ENCODE measurements at regions of chr15 and their contacts with region 1.

Region 1: DNA sequence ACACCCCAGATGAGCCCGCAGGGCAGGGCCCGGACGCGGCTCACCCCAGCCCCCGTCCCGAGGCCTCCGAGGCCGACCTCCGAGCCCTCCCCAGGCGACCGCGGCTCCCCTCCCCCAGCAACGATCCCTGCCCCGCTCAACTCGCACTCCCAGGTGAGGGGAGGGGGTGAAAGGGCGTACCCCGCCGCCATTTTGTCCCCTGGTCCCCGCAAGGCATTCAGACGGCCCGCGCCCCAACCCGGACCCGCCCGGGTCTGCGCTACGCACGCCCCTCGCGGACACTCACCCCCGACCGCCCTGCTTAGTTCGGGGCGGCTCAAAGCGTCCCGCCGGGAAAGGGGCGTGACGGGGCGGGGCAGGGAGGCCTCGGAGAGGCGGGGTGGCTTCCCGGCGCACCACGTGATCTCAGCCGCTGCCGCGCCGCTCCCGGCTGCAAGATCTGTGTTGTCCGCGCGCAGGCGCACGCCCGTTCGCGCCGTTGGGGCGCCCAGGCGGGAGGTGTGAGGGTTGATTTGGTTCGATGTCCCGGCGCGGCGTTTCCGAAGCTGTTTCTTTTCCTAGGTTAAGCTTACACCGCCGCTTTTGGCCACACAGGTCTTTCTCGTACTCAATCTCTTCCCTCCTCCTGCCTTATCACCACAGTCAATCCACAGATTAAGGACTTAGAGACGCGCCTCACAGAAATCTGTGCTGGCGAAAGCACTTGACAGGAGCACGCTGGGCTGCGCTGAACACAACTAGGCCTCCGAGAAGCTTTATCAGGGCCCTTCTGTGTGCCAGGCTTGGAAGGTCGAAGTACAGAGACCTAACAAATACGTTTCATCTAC is at the start of gene SCAPER:
- DNase-seq: peak; percentile 88 to 90 (median 90)
- H3K4me3 ChIP-seq: peak within 1 kb of the TSS; percentile 83 to 87
- H3K4me3 Mint-ChIP-seq: peak within 1 kb of the TSS; percentile 94 to 97 (median 94)
- H3K27ac ChIP-seq: peak within 1 kb of the TSS; percentile 71
- H3K27ac Mint-ChIP-seq: peak within 1 kb of the TSS; percentile 92 to 98 (median 96)
- H3K4me1 ChIP-seq: peaks cover 36% of the 10 kb centered on the region
- H3K4me1 Mint-ChIP-seq: peaks cover 24 to 41% (median 29%) of the 10 kb centered on the region in 4 donors
- H3K27me3 ChIP-seq: no peaks in the 10 kb centered on the region
- H3K27me3 Mint-ChIP-seq: no peaks in the 10 kb centered on the region
- total RNA-seq, gene SCAPER: 41.3 to 41.4 TPM

Region 2: GRCh38 chr15:76776480-76776879 is 128.7 kb before region 1 on chr15:
- CTCF ChIA-PET with region 1: no interaction called
- POLR2A ChIA-PET with region 1: no interaction called
- intact Hi-C with region 1: no loop called
- DNase-seq: no peak
- H3K4me3 ChIP-seq: no peak overlapping the region
- H3K4me3 Mint-ChIP-seq: no peak overlapping the region
- H3K27ac ChIP-seq: no peak overlapping the region
- H3K27ac Mint-ChIP-seq: no peak overlapping the region
- H3K4me1 ChIP-seq: no peaks in the 10 kb centered on the region
- H3K4me1 Mint-ChIP-seq: no peaks in the 10 kb centered on the region
- H3K27me3 ChIP-seq: no peaks in the 10 kb centered on the region
- H3K27me3 Mint-ChIP-seq: no peaks in the 10 kb centered on the region

Region 3: DNA sequence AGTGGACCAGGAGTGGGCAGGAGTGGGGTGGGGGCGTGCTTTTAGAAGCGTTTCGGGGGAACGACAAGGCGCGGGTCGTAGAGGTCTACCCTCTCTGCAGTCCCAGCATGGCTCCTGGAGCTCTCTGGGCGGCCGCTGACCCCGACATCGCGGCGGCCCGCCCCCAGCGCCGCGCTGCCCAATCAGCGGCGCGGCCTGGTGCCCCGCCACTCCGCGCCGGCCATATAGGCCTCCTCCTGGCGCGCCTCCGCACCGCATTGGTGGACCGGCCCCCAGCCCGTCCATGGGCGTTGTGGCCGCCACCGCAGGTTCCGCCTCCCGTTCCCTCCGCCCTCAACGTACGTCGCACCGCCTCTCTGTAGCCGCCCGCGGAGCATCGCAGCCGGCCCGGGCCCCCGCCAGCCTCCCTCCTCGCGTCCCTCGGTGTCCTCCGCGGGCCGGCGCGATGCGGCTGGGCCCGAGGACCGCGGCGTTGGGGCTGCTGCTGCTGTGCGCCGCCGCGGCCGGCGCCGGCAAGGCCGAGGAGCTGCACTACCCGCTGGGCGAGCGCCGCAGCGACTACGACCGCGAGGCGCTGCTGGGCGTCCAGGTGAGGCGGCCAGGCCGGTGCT is 26.3 kb after region 1 on chr15 and contains the start of gene RCN2:
- CTCF ChIA-PET with region 1: interaction called, 5 read pairs
- POLR2A ChIA-PET with region 1: interaction called, 29 read pairs
- intact Hi-C with region 1: loop called (anchors 1 kb)
- DNase-seq: peak; percentile 89 to 92 (median 91)
- H3K4me3 ChIP-seq: peak within 1 kb of the TSS; percentile 48 to 67
- H3K4me3 Mint-ChIP-seq: peak within 1 kb of the TSS; percentile 89 to 94 (median 91)
- H3K27ac ChIP-seq: peak within 1 kb of the TSS; percentile 63
- H3K27ac Mint-ChIP-seq: peak within 1 kb of the TSS; percentile 70 to 95 (median 94)
- H3K4me1 ChIP-seq: peaks cover 26% of the 10 kb centered on the region
- H3K4me1 Mint-ChIP-seq: peaks cover 18 to 33% (median 28%) of the 10 kb centered on the region in 4 donors
- H3K27me3 ChIP-seq: no peaks in the 10 kb centered on the region
- H3K27me3 Mint-ChIP-seq: no peaks in the 10 kb centered on the region
- total RNA-seq, gene RCN2: 28.4 to 30.2 TPM

Region 4: GRCh38 chr15:77024271-77025082 is 119.3 kb after region 1 on chr15:
- CTCF ChIA-PET with region 1: interaction called, 4 read pairs
- POLR2A ChIA-PET with region 1: interaction called, 6 read pairs
- intact Hi-C with region 1: loop called (anchors 5 kb)
- DNase-seq: peak; percentile 55 to 66 (median 59)
- H3K4me3 ChIP-seq: no peak overlapping the region
- H3K4me3 Mint-ChIP-seq: peak overlapping the region in 1 of 8 donors; percentile 70
- H3K27ac ChIP-seq: peak overlapping the region; percentile 41
- H3K27ac Mint-ChIP-seq: peak overlapping the region; percentile 77 to 100 (median 98)
- H3K4me1 ChIP-seq: peaks cover 48% of the 10 kb centered on the region
- H3K4me1 Mint-ChIP-seq: peaks cover 28 to 50% (median 43%) of the 10 kb centered on the region in 4 donors
- H3K27me3 ChIP-seq: no peaks in the 10 kb centered on the region
- H3K27me3 Mint-ChIP-seq: no peaks in the 10 kb centered on the region

Region 5: DNA sequence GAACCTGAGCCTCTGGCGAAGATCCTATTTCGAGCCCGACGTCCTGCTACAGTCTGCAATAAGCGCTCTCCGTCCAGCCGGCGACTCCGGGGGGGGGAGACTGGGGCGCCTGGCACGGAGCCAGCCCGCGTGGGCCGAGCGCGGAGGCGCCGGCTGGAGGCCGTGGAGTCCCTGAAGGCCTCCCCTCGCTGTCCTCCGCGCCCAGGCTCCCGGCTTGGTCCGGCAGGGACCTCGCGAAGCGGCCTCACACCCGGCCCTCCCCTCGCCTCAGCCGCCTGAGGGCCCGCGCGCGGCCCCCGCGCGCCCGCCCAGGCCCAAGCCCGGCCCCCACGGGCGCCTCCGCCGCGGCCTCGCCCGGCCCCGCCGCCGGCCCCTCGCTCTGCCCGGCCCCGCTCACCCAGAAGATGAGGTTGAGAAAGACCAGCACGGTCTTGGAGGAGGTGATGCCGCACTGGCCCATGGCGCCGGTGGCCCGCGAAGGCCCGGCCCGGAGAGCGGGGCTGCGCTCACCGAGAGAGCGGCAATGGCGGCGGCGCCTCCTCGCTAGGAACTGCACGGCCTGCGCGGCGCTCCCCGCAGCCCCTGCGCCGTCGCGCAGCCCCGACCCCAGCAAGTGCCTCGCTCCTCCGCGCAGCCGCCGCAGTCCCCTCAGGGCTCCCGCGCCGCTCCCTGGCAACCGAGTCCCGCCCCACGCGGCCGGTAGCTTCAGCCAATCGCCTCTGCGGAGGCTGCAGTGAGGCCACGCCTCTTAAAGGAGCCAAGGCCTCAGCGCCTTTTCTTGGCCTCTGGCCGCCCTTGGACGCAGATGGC is 165.5 kb after region 1 on chr15 and contains the start of gene TSPAN3:
- CTCF ChIA-PET with region 1: no interaction called
- POLR2A ChIA-PET with region 1: no interaction called
- intact Hi-C with region 1: loop called (anchors 1 kb)
- DNase-seq: peak; percentile 89 to 90 (median 90)
- H3K4me3 ChIP-seq: peak within 1 kb of the TSS; percentile 14 to 63
- H3K4me3 Mint-ChIP-seq: peak within 1 kb of the TSS; percentile 82 to 92 (median 88)
- H3K27ac ChIP-seq: peak within 1 kb of the TSS; percentile 40
- H3K27ac Mint-ChIP-seq: peak within 1 kb of the TSS; percentile 74 to 90 (median 85)
- H3K4me1 ChIP-seq: peaks cover 14% of the 10 kb centered on the region
- H3K4me1 Mint-ChIP-seq: peaks cover 13 to 23% (median 18%) of the 10 kb centered on the region in 4 donors
- H3K27me3 ChIP-seq: no peaks in the 10 kb centered on the region
- H3K27me3 Mint-ChIP-seq: no peaks in the 10 kb centered on the region
- total RNA-seq, gene TSPAN3: 13.3 to 14.3 TPM

Region 6: DNA sequence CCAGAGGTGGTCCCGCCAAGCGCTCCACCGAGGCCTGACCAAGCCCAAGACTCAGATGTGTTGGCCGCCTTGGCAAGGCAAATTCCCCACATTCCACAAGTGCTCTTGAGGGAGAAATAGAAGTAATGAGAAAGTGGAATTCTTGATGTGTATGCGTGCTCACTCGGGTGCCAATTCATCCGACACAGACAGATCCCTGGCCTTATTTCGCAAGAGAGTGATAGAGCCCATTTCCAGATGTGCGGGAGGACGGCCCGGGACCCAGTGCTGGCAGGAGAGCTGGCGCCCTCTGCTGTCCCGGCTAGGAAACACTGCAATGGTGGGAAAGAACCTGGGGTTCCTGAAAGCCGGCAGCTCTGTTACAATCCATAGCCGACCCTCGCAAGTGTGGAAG is 591.5 kb after region 1 on chr15:
- CTCF ChIA-PET with region 1: no interaction called
- POLR2A ChIA-PET with region 1: no interaction called
- intact Hi-C with region 1: loop called (anchors 1 kb)
- DNase-seq: peak; percentile 51 to 66 (median 60)
- H3K4me3 ChIP-seq: no peak overlapping the region
- H3K4me3 Mint-ChIP-seq: no peak overlapping the region
- H3K27ac ChIP-seq: no peak overlapping the region
- H3K27ac Mint-ChIP-seq: peak overlapping the region in 1 of 7 donors; percentile 31
- H3K4me1 ChIP-seq: peaks cover 9% of the 10 kb centered on the region
- H3K4me1 Mint-ChIP-seq: peaks cover 9 to 17% (median 16%) of the 10 kb centered on the region in 4 donors
- H3K27me3 ChIP-seq: no peaks in the 10 kb centered on the region
- H3K27me3 Mint-ChIP-seq: no peaks in the 10 kb centered on the region

Measured in CD4-positive, alpha-beta memory T cell (primary cell).